CD8-positive, alpha-beta T cell (primary cell): ENCODE measurements at regions of chr7 and their contacts with region 1.

Region 1: DNA sequence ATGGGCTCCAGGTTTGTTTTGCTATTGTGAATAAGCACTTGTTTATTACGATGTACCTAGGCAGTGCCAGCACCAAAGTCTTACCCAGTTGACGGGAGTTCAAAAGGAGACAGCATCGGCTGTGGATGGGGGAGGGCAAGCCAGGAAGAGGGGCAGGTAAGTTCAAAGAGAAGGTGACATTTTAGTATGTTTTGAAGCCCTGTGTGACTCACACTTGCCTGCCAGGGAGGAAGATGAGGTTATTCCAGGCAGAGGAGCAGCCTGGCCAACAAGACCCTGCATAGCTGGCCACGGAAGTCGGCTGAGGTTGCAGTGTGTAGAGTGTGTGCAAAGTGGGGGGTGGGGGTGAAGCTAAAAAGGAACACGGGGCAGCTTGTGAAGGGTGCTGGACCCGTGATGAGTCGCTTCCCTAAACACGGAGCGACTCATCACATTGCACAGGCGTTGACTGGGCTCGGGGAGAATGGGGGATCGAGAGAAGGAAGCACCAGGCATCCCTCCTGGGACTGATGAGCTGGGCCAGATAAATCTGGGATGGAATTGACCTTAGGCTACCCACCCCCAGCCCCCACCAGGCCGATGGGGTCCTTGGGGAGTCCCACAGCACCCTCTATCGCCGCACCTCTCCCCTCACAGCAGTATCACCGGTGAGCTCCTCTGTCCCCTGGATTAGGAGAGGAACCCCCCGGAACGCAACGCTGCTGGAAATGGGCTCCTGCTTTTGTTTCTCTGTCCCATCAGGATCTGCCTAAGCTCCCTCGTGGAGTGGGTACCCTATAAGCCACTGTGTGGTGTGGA is 97.9 kb upstream of the IKZF1 start:
- DNase-seq: peak; percentile 46 to 89 (median 78)
- ATAC-seq: peak; percentile 74
- H3K4me3 ChIP-seq: peak overlapping the region in 1 of 2 experiments; percentile 12
- H3K4me3 Mint-ChIP-seq: peak overlapping the region; percentile 80
- H3K27ac ChIP-seq: peak overlapping the region; percentile 3 to 37
- H3K27ac Mint-ChIP-seq: peak overlapping the region; percentile 92
- H3K4me1 ChIP-seq: peaks cover 74% of the 10 kb centered on the region
- H3K4me1 Mint-ChIP-seq: peaks cover 76% of the 10 kb centered on the region
- H3K27me3 ChIP-seq: no peaks in the 10 kb centered on the region
- H3K27me3 Mint-ChIP-seq: no peaks in the 10 kb centered on the region
- CTCF ChIP-seq: no peak

Region 2: DNA sequence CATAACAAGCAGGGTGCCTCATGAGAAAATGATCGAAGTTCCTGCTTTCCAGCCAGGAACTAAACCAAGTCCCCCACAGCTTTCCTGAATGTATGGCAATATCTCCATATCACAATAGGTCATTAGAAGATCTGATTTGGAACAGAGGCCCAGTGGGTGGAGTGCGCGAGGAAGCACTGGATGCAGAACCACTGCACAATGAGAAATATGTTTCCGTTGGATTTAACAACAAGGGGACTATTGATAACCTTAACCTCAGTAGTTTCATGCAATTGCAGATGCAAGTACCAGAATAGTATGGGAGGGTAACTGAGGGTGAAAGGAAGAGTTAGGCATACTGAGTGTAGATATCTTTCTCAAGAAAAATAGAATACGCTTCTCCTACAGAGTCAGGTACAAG is 158.9 kb before region 1 on chr7:
- CTCF ChIA-PET with region 1: no interaction called
- POLR2A ChIA-PET with region 1: no interaction called
- intact Hi-C with region 1: no loop called
- DNase-seq: no peak
- ATAC-seq: no peak
- H3K4me3 ChIP-seq: no peak overlapping the region
- H3K4me3 Mint-ChIP-seq: no peak overlapping the region
- H3K27ac ChIP-seq: no peak overlapping the region
- H3K27ac Mint-ChIP-seq: no peak overlapping the region
- H3K4me1 ChIP-seq: no peaks in the 10 kb centered on the region
- H3K4me1 Mint-ChIP-seq: no peaks in the 10 kb centered on the region
- H3K27me3 ChIP-seq: no peaks in the 10 kb centered on the region
- H3K27me3 Mint-ChIP-seq: peaks cover 44% of the 10 kb centered on the region
- CTCF ChIP-seq: no peak

Region 3: GRCh38 chr7:50147951-50148808 is 58.5 kb before region 1 on chr7:
- CTCF ChIA-PET with region 1: interaction called, 19 read pairs
- POLR2A ChIA-PET with region 1: interaction called, 5 read pairs
- intact Hi-C with region 1: loop called in 1 of 2 experiments (anchors 2 kb)
- DNase-seq: peak in 4 of 9 experiments; percentile 18 to 85 (median 60)
- ATAC-seq: peak; percentile 89
- H3K4me3 ChIP-seq: no peak overlapping the region
- H3K4me3 Mint-ChIP-seq: peak overlapping the region; percentile 42
- H3K27ac ChIP-seq: no peak overlapping the region
- H3K27ac Mint-ChIP-seq: peak overlapping the region; percentile 80
- H3K4me1 ChIP-seq: peaks cover 21% of the 10 kb centered on the region
- H3K4me1 Mint-ChIP-seq: peaks cover 36% of the 10 kb centered on the region
- H3K27me3 ChIP-seq: no peaks in the 10 kb centered on the region
- H3K27me3 Mint-ChIP-seq: no peaks in the 10 kb centered on the region
- CTCF ChIP-seq: no peak

Region 4: DNA sequence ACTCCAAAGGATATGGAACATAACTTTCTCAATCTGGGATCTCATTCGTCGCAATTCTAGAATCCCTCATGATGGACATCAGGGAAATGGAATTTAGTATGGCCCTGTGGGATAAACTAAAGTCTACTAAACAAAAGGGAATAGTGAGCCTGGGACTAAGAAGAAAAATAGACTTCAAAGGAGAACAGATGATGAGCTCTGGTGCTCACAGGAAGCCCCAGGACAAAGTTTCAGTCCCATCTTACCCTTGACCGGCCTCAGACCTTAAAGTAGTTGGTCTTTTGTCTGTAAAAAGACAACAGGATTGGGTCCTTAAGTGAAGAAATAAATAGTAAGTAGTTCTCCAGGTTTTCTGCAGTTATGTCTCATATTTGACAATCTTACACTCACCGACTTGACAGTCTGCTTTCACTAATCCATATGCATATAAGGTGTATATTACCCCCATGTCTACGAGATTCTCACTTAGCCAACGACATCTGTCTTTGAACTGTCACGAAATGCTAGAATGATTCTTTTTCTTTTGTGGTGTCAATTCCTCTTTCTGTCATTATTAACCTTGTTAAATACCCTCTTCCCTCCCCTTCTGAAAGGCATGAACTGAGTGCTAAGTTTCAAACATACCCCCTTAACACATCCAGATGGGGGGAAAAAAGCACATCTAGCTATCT is 87.0 kb after region 1 on chr7:
- CTCF ChIA-PET with region 1: interaction called, 14 read pairs
- POLR2A ChIA-PET with region 1: interaction called, 5 read pairs
- intact Hi-C with region 1: no loop called
- DNase-seq: no peak
- ATAC-seq: no peak
- H3K4me3 ChIP-seq: no peak overlapping the region
- H3K4me3 Mint-ChIP-seq: no peak overlapping the region
- H3K27ac ChIP-seq: no peak overlapping the region
- H3K27ac Mint-ChIP-seq: no peak overlapping the region
- H3K4me1 ChIP-seq: no peaks in the 10 kb centered on the region
- H3K4me1 Mint-ChIP-seq: peaks cover 34% of the 10 kb centered on the region
- H3K27me3 ChIP-seq: no peaks in the 10 kb centered on the region
- H3K27me3 Mint-ChIP-seq: no peaks in the 10 kb centered on the region
- CTCF ChIP-seq: no peak

Region 5: DNA sequence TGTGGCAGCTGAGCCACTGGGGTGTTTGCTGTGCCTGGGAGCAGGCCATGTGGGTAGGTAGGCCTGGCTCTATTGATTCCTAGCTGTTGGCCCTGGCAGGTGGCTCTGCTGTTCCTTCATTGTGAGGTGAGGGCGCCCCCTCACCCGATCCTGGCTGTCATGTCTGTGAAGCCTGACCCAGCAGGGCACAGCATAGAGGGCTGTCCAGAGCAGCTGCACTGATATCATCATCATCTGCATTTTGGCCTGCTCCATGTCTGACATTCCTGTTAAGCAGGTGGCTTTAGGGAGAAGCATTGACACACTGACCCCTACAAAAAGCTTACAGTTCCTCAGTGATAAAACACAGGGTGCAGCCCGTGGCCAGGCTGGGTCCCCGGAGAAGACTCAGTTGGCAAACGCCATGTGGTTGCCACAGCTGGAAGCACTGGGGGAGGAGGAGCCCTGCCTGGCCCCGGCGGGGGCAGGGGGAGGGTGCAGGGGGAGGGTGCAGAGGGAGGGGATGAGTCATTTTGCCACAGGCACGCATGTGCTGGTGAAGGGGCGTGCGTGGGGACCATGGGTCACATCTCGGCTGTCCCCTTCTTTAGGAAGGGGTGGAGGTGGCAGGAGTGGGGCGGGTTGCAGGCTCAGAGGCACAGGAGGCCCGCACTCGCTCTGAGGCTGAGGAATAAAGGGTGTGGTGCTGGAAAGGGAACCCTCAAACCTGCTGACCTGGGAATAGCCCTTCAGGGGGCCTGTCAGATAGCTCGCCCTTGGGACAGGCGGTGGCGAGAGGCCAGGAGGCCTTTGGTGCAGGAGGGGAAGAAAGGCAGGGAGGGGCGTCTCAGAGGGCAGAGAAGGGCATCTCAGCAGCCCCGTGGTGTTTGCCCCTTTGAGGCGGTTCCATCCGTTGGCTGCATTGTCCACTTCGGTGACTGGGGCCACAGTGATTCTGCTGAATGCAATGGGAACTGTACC is 129.4 kb after region 1 on chr7:
- CTCF ChIA-PET with region 1: interaction called, 29 read pairs
- POLR2A ChIA-PET with region 1: interaction called, 8 read pairs
- intact Hi-C with region 1: no loop called
- DNase-seq: peak; percentile 55 to 91 (median 84)
- ATAC-seq: peak; percentile 55
- H3K4me3 ChIP-seq: peak overlapping the region; percentile 10 to 19
- H3K4me3 Mint-ChIP-seq: peak overlapping the region; percentile 77
- H3K27ac ChIP-seq: peak overlapping the region; percentile 40 to 90
- H3K27ac Mint-ChIP-seq: no peak overlapping the region
- H3K4me1 ChIP-seq: peaks cover 99% of the 10 kb centered on the region
- H3K4me1 Mint-ChIP-seq: peaks cover 35% of the 10 kb centered on the region
- H3K27me3 ChIP-seq: no peaks in the 10 kb centered on the region
- H3K27me3 Mint-ChIP-seq: no peaks in the 10 kb centered on the region
- CTCF ChIP-seq: no peak

Region 6: DNA sequence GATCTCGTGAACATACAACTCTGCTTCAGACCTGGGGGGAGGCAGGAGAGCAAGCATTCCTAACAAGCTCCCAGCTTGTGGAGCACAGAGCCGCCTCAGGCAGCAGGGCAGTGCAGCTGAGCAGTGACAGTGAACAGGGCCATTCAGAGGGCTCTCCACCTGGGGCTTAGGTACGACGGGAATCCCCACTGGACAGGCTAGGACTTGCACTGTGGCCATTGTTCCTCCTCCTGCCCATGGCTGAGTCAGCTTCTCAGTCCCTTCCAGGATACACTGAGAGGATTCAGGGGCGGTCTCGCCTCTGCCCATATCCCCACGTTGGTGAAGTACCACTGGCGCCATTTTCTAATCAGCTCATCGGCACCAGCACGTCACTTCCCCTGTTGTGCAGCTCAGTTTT is 172.4 kb after region 1 on chr7:
- CTCF ChIA-PET with region 1: interaction called, 339 read pairs
- POLR2A ChIA-PET with region 1: interaction called, 4 read pairs
- intact Hi-C with region 1: no loop called
- DNase-seq: no peak
- ATAC-seq: peak; percentile 25
- H3K4me3 ChIP-seq: no peak overlapping the region
- H3K4me3 Mint-ChIP-seq: peak overlapping the region; percentile 26
- H3K27ac ChIP-seq: peak overlapping the region in 1 of 2 experiments; percentile 24
- H3K27ac Mint-ChIP-seq: peak overlapping the region; percentile 86
- H3K4me1 ChIP-seq: peaks cover 79% of the 10 kb centered on the region
- H3K4me1 Mint-ChIP-seq: peaks cover 92% of the 10 kb centered on the region
- H3K27me3 ChIP-seq: no peaks in the 10 kb centered on the region
- H3K27me3 Mint-ChIP-seq: no peaks in the 10 kb centered on the region
- CTCF ChIP-seq: no peak

Region 7: DNA sequence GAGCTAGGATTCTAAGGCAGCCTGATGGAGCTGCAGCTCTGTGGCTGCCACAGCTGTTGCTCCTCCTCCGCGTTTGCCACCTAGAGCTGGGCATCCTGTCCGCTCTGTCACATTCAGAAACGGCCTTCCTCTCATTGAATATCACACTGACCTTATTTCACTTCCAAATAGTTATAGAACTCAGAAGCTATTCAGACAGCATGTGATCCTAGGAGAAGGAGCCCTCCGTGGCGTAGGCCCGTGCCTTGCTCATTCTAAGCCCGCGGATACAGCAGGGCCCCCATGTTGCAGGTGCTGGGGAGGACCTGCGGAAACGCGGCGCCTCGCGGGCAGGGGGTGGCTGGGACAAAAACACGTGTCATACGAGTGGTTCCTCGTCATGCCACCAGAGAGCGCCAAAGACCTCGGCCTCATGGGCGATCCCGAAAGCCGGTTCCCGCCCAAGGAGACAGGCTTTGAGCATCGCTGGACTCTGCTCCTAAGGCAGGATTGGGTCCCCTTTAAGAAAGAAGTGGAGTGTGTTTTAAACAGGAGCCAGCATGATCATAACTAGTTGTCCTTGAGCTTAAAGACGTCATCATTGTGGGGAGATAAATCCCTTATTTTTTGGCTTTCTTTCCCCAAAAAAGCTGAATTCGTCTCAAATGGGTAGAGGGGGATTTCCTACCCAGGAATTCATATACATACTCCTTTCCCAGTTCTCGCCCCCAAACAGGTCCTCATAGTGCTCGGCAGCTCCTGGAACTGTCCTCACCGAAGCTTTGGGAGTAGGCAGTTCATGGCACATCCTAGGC is 261.4 kb after region 1 on chr7:
- CTCF ChIA-PET with region 1: interaction called, 14 read pairs
- POLR2A ChIA-PET with region 1: no interaction called
- intact Hi-C with region 1: loop called in 1 of 2 experiments (anchors 5 kb)
- DNase-seq: peak; percentile 54 to 88 (median 77)
- ATAC-seq: peak; percentile 98
- H3K4me3 ChIP-seq: peak overlapping the region; percentile 1 to 12
- H3K4me3 Mint-ChIP-seq: peak overlapping the region; percentile 63
- H3K27ac ChIP-seq: no peak overlapping the region
- H3K27ac Mint-ChIP-seq: no peak overlapping the region
- H3K4me1 ChIP-seq: peaks cover 4% of the 10 kb centered on the region
- H3K4me1 Mint-ChIP-seq: peaks cover 11% of the 10 kb centered on the region
- H3K27me3 ChIP-seq: no peaks in the 10 kb centered on the region
- H3K27me3 Mint-ChIP-seq: no peaks in the 10 kb centered on the region
- CTCF ChIP-seq: peak; percentile 91